Endothelial cell of umbilical vein (primary cell): ENCODE measurements at regions of chr2 and their contacts with region 1.

Region 1: DNA sequence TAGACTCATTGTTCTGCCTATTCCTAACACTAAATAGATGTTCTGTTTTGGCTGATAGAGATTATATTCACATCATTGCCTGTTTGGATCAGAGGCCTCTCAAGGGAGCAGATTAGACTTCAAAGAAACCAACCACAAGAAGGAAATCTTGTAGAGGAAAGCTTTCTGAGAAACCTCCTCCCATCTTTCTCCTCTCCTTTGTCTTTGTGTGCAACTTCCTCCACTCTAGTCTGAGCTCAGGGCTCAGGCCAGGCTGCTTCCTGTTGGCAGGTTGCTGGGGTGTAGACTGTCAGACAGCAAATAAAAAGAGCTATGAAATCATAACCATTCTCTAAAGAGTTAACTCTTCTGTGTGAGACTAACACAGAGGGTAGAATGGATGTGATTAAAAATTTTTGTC is 113.0 kb downstream of the TGFA start:
- DNase-seq: no peak
- H3K4me3 ChIP-seq: no peak overlapping the region
- H3K27ac ChIP-seq: no peak overlapping the region
- H3K4me1 ChIP-seq: no peaks in the 10 kb centered on the region
- H3K27me3 ChIP-seq: peaks cover 2 to 11% of the 10 kb centered on the region in 2 experiments
- CTCF ChIP-seq: no peak
- POLR2A ChIP-seq: no peak

Region 2: GRCh38 chr2:70029814-70030409 is 410.7 kb before region 1 on chr2:
- CTCF ChIA-PET with region 1: no interaction called
- POLR2A ChIA-PET with region 1: no interaction called
- dilution Hi-C with region 1: no loop called
- intact Hi-C with region 1: no loop called
- DNase-seq: peak; percentile 8
- H3K4me3 ChIP-seq: no peak overlapping the region
- H3K27ac ChIP-seq: no peak overlapping the region
- H3K4me1 ChIP-seq: no peaks in the 10 kb centered on the region
- H3K27me3 ChIP-seq: no peaks in the 10 kb centered on the region
- CTCF ChIP-seq: no peak
- POLR2A ChIP-seq: no peak

Region 3: DNA sequence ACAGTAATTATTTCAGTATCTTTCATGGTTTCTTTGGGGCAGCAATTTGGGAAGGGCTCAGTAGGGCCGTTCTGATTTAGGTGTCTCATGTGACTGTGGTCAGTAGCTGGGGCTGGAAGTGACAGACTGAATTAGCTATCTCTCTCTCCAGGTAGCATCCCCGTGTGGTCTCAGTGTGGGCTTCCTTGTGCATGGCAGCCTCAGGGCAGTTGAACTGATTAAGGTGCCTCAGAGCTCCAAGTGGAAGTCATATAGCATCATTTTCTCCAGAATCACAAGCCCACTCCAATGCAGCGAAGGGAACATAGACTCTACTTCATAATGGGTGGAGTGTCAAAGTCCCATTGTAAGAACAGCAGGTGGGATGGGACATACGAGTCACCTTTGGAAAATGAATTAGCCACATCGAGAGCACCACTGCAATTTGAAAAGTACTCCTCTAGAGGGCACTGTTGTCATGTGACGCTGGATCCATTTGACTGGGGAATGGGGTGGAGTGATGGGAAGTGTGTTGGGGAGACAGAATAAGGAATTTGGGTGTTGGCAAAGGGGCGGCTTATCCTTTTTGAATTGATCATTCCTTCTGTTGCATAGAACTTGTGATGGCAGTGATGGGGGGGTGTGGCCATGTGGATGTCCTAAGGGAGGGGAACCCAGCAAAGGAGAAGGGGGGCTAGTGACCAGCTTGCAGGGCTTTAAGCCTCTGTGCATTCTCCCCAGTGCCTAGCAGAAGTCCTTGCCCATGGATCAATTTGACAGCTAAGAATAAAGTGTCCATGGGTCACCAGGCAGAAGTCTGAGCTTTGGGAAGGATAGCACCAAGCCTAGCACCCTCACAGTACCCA is 99.5 kb before region 1 on chr2:
- CTCF ChIA-PET with region 1: no interaction called
- POLR2A ChIA-PET with region 1: no interaction called
- dilution Hi-C with region 1: no loop called
- intact Hi-C with region 1: loop called (anchors 10 kb)
- DNase-seq: peak; percentile 55
- H3K4me3 ChIP-seq: no peak overlapping the region
- H3K27ac ChIP-seq: no peak overlapping the region
- H3K4me1 ChIP-seq: no peaks in the 10 kb centered on the region
- H3K27me3 ChIP-seq: no peaks in the 10 kb centered on the region
- CTCF ChIP-seq: peak; percentile 71 to 82
- POLR2A ChIP-seq: no peak

Region 4: GRCh38 chr2:70403267-70404053 is 37.2 kb before region 1 on chr2:
- CTCF ChIA-PET with region 1: no interaction called
- POLR2A ChIA-PET with region 1: no interaction called
- dilution Hi-C with region 1: no loop called
- intact Hi-C with region 1: loop called (anchors 1 kb)
- DNase-seq: no peak
- H3K4me3 ChIP-seq: no peak overlapping the region
- H3K27ac ChIP-seq: no peak overlapping the region
- H3K4me1 ChIP-seq: no peaks in the 10 kb centered on the region
- H3K27me3 ChIP-seq: peaks cover 9 to 12% of the 10 kb centered on the region in 2 experiments
- CTCF ChIP-seq: no peak
- POLR2A ChIP-seq: no peak